CD8-positive, alpha-beta memory T cell (primary cell): ENCODE measurements at regions of chr12 and their contacts with region 1.

Region 1: GRCh38 chr12:1217191-1217949 is 226.3 kb downstream of the ERC1 start:
- DNase-seq: no peak
- H3K4me3 ChIP-seq: no peak overlapping the region
- H3K4me3 Mint-ChIP-seq: no peak overlapping the region
- H3K27ac ChIP-seq: no peak overlapping the region
- H3K27ac Mint-ChIP-seq: no peak overlapping the region
- H3K4me1 ChIP-seq: no peaks in the 10 kb centered on the region
- H3K4me1 Mint-ChIP-seq: no peaks in the 10 kb centered on the region
- H3K27me3 ChIP-seq: no peaks in the 10 kb centered on the region
- H3K27me3 Mint-ChIP-seq: no peaks in the 10 kb centered on the region

Region 2: GRCh38 chr12:662566-663292 is 554.6 kb before region 1 on chr12:
- CTCF ChIA-PET with region 1: no interaction called
- POLR2A ChIA-PET with region 1: no interaction called
- DNase-seq: no peak
- H3K4me3 ChIP-seq: peak overlapping the region; percentile 19
- H3K4me3 Mint-ChIP-seq: peak overlapping the region; percentile 0 to 89 (median 84)
- H3K27ac ChIP-seq: no peak overlapping the region
- H3K27ac Mint-ChIP-seq: peak overlapping the region in 7 of 8 donors; percentile 36 to 93 (median 89)
- H3K4me1 ChIP-seq: peaks cover 34% of the 10 kb centered on the region
- H3K4me1 Mint-ChIP-seq: peaks cover 35 to 58% (median 44%) of the 10 kb centered on the region in 3 donors
- H3K27me3 ChIP-seq: no peaks in the 10 kb centered on the region
- H3K27me3 Mint-ChIP-seq: no peaks in the 10 kb centered on the region

Region 3: DNA sequence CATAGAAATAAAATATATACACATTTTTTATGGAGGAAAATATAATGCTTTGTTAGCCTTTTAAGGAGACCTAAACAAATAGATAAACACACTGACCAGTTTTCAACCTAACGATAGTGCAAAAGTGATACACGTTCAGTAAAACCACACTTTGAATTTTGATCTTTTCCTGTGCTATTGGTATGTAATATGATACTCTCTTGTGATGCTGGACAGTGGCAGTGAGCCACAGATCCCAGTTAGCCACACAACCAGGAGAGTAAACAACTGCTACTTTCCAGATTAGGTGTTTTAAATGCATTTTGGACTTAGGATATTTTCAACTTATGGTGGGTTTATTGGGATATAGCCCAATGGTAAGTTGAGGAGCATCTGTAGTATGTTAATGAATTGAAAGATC is 16.7 kb after region 1 on chr12:
- CTCF ChIA-PET with region 1: no interaction called
- POLR2A ChIA-PET with region 1: interaction called, 10 read pairs
- DNase-seq: no peak
- H3K4me3 ChIP-seq: no peak overlapping the region
- H3K4me3 Mint-ChIP-seq: no peak overlapping the region
- H3K27ac ChIP-seq: no peak overlapping the region
- H3K27ac Mint-ChIP-seq: no peak overlapping the region
- H3K4me1 ChIP-seq: no peaks in the 10 kb centered on the region
- H3K4me1 Mint-ChIP-seq: no peaks in the 10 kb centered on the region
- H3K27me3 ChIP-seq: no peaks in the 10 kb centered on the region
- H3K27me3 Mint-ChIP-seq: no peaks in the 10 kb centered on the region